CD8-positive, alpha-beta memory T cell (primary cell): ENCODE measurements at regions of chr12 and their contacts with region 1.

Region 1: GRCh38 chr12:57111031-57111734 is at the start of gene STAT6:
- DNase-seq: peak; percentile 76 to 93 (median 88)
- H3K4me3 ChIP-seq: peak within 1 kb of the TSS; percentile 99
- H3K4me3 Mint-ChIP-seq: peak within 1 kb of the TSS; percentile 96 to 100 (median 99)
- H3K27ac ChIP-seq: peak within 1 kb of the TSS; percentile 96
- H3K27ac Mint-ChIP-seq: peak within 1 kb of the TSS; percentile 95 to 100 (median 98)
- H3K4me1 ChIP-seq: peaks cover 32% of the 10 kb centered on the region
- H3K4me1 Mint-ChIP-seq: peaks cover 38 to 53% (median 50%) of the 10 kb centered on the region in 3 donors
- H3K27me3 ChIP-seq: no peaks in the 10 kb centered on the region
- H3K27me3 Mint-ChIP-seq: peaks cover 0 to 9% of the 10 kb centered on the region in 2 donors
- total RNA-seq, gene STAT6: 262 to 265 TPM

Region 2: GRCh38 chr12:57063991-57064685 is 47.0 kb before region 1 on chr12:
- CTCF ChIA-PET with region 1: interaction called, 183 read pairs
- POLR2A ChIA-PET with region 1: interaction called, 75 read pairs
- DNase-seq: peak in 4 of 5 donors; percentile 39 to 82 (median 74)
- H3K4me3 ChIP-seq: peak overlapping the region; percentile 46
- H3K4me3 Mint-ChIP-seq: peak overlapping the region; percentile 14 to 83 (median 76)
- H3K27ac ChIP-seq: peak overlapping the region; percentile 38
- H3K27ac Mint-ChIP-seq: peak overlapping the region; percentile 70 to 96 (median 92)
- H3K4me1 ChIP-seq: peaks cover 27% of the 10 kb centered on the region
- H3K4me1 Mint-ChIP-seq: peaks cover 12 to 31% (median 25%) of the 10 kb centered on the region in 3 donors
- H3K27me3 ChIP-seq: no peaks in the 10 kb centered on the region
- H3K27me3 Mint-ChIP-seq: no peaks in the 10 kb centered on the region

Region 3: GRCh38 chr12:57078519-57079404 is 32.4 kb before region 1 on chr12 and contains the start of gene NEMP1:
- CTCF ChIA-PET with region 1: interaction called, 56 read pairs
- POLR2A ChIA-PET with region 1: interaction called, 47 read pairs
- DNase-seq: peak; percentile 92 to 99 (median 98)
- H3K4me3 ChIP-seq: peak within 1 kb of the TSS; percentile 80
- H3K4me3 Mint-ChIP-seq: peak within 1 kb of the TSS; percentile 86 to 97 (median 92)
- H3K27ac ChIP-seq: peak within 1 kb of the TSS; percentile 81
- H3K27ac Mint-ChIP-seq: peak within 1 kb of the TSS; percentile 69 to 98 (median 94)
- H3K4me1 ChIP-seq: peaks cover 16% of the 10 kb centered on the region
- H3K4me1 Mint-ChIP-seq: peaks cover 16 to 28% (median 20%) of the 10 kb centered on the region in 3 donors
- H3K27me3 ChIP-seq: no peaks in the 10 kb centered on the region
- H3K27me3 Mint-ChIP-seq: no peaks in the 10 kb centered on the region
- total RNA-seq, gene NEMP1: 50.5 to 50.9 TPM

Region 4: DNA sequence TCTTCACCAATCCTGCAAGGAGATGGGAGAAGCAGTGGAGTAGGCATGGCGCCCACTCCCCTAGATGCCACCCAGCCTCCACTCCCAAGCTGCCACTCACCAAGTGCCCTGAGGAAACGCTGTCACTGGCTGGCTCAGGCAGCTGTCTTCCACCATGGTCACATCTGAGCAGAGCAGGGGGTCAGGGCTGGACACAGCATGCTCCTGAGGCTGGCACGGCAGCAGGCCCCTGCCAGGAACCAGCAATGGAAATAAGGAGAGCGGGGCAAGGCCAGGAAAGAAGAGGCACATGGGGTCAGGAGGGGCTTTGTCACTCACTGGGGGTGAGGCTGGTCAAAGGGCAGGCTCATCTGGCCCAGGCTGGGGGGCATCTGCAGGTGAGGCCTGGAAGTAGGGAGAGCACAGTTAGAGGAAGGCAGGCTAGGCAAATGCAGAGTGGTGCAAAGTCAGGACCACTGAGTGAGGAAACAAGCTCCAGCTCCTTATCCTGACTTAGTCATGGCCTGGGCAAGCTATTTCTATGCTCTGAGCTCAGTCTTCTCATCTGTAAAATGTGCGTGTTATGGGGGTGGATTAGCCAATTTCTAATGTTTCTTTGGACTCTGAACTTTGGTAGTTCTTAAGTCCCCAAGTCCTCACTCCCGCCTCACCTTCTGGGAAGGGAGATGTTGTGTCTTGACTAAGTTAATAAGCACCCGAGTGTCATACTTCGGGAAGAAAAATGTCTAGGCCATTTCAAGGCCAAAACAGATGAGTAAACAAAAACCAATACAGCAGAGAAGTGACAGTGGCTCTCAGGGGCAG is 14.2 kb before region 1 on chr12:
- CTCF ChIA-PET with region 1: interaction called, 195 read pairs
- POLR2A ChIA-PET with region 1: interaction called, 131 read pairs
- DNase-seq: no peak
- H3K4me3 ChIP-seq: no peak overlapping the region
- H3K4me3 Mint-ChIP-seq: no peak overlapping the region
- H3K27ac ChIP-seq: peak overlapping the region; percentile 24
- H3K27ac Mint-ChIP-seq: peak overlapping the region in 4 of 8 donors; percentile 51 to 83 (median 68)
- H3K4me1 ChIP-seq: peaks cover 24% of the 10 kb centered on the region
- H3K4me1 Mint-ChIP-seq: peaks cover 20 to 47% (median 21%) of the 10 kb centered on the region in 3 donors
- H3K27me3 ChIP-seq: no peaks in the 10 kb centered on the region
- H3K27me3 Mint-ChIP-seq: no peaks in the 10 kb centered on the region

Region 5: GRCh38 chr12:57182921-57183790 is 72.0 kb after region 1 on chr12:
- CTCF ChIA-PET with region 1: interaction called, 21 read pairs
- POLR2A ChIA-PET with region 1: interaction called, 3 read pairs
- DNase-seq: peak; percentile 65 to 81 (median 67)
- H3K4me3 ChIP-seq: no peak overlapping the region
- H3K4me3 Mint-ChIP-seq: no peak overlapping the region
- H3K27ac ChIP-seq: no peak overlapping the region
- H3K27ac Mint-ChIP-seq: peak overlapping the region in 1 of 8 donors; percentile 47
- H3K4me1 ChIP-seq: no peaks in the 10 kb centered on the region
- H3K4me1 Mint-ChIP-seq: no peaks in the 10 kb centered on the region
- H3K27me3 ChIP-seq: no peaks in the 10 kb centered on the region
- H3K27me3 Mint-ChIP-seq: peaks cover 0 to 2% of the 10 kb centered on the region in 2 donors

Region 6: DNA sequence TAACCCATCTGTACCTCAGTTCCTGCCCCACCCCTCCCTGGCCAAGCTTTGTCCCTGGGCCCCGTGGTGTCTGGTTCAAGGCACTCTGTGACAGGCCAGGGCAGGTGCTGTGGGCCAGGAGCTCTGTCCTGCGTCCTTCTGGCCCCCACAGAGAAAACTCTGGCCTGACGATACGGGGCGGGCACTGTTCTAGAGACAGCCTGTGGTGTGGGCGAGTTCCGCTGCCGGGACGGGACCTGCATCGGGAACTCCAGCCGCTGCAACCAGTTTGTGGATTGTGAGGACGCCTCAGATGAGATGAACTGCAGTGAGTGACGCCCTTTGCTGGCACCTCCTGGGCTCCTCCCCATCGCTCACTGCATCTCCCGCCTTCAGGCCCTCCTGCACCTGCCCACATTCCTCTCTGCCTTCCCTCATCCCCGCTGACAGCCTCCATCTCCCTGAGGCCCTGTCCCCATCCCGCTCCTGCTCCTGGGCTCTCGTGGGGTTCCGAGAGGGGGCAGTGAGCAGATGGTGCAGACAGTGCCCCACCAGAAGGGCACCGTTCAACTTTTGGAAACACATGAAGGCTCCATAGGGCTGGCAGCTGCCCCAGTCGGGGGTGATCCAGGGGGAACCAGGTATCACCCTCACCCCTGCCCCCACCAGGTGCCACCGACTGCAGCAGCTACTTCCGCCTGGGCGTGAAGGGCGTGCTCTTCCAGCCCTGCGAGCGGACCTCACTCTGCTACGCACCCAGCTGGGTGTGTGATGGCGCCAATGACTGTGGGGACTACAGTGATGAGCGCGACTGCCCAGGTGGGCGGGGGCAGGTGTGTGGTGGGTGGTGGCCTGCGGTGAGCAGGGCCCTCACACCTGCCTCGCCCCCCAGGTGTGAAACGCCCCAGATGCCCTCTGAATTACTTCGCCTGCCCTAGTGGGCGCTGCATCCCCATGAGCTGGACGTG is 82.8 kb after region 1 on chr12:
- CTCF ChIA-PET with region 1: no interaction called
- POLR2A ChIA-PET with region 1: no interaction called
- DNase-seq: no peak
- H3K4me3 ChIP-seq: no peak overlapping the region
- H3K4me3 Mint-ChIP-seq: no peak overlapping the region
- H3K27ac ChIP-seq: no peak overlapping the region
- H3K27ac Mint-ChIP-seq: no peak overlapping the region
- H3K4me1 ChIP-seq: no peaks in the 10 kb centered on the region
- H3K4me1 Mint-ChIP-seq: no peaks in the 10 kb centered on the region
- H3K27me3 ChIP-seq: no peaks in the 10 kb centered on the region
- H3K27me3 Mint-ChIP-seq: no peaks in the 10 kb centered on the region

Region 7: DNA sequence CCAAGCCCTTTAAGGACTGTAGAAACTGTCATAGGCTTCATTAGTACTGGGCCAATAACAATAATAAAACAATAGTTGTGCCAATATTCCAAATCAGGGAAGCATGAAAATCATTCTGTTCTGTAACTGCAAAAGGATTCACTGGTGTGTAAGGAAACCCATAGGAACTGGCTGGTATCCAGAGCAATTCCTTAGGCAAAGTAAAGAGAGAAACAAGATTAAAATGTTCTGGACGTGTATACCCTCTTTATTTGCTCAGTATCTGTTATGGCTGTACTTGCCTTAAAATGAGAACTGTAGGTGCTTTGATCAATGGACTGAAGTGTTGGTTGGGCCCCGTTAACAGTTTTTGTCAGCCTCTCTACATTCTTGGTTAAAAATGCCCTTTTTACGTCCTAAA is 212.2 kb after region 1 on chr12:
- CTCF ChIA-PET with region 1: no interaction called
- POLR2A ChIA-PET with region 1: no interaction called
- DNase-seq: no peak
- H3K4me3 ChIP-seq: no peak overlapping the region
- H3K4me3 Mint-ChIP-seq: no peak overlapping the region
- H3K27ac ChIP-seq: no peak overlapping the region
- H3K27ac Mint-ChIP-seq: no peak overlapping the region
- H3K4me1 ChIP-seq: no peaks in the 10 kb centered on the region
- H3K4me1 Mint-ChIP-seq: peaks cover 7 to 14% (median 8%) of the 10 kb centered on the region in 3 donors
- H3K27me3 ChIP-seq: no peaks in the 10 kb centered on the region
- H3K27me3 Mint-ChIP-seq: no peaks in the 10 kb centered on the region

Region 8: GRCh38 chr12:57765042-57765697 is 654.0 kb after region 1 on chr12:
- CTCF ChIA-PET with region 1: no interaction called
- POLR2A ChIA-PET with region 1: no interaction called
- DNase-seq: peak in 4 of 5 donors; percentile 32 to 67 (median 41)
- H3K4me3 ChIP-seq: peak overlapping the region; percentile 70
- H3K4me3 Mint-ChIP-seq: peak overlapping the region; percentile 83 to 90 (median 85)
- H3K27ac ChIP-seq: no peak overlapping the region
- H3K27ac Mint-ChIP-seq: peak overlapping the region in 4 of 8 donors; percentile 29 to 95 (median 82)
- H3K4me1 ChIP-seq: peaks cover 24% of the 10 kb centered on the region
- H3K4me1 Mint-ChIP-seq: peaks cover 19 to 30% (median 21%) of the 10 kb centered on the region in 3 donors
- H3K27me3 ChIP-seq: peaks cover 18% of the 10 kb centered on the region
- H3K27me3 Mint-ChIP-seq: peaks cover 30 to 33% of the 10 kb centered on the region in 2 donors